Activated CD4-positive, alpha-beta T cell treated with anti-CD3 and anti-CD28 coated beads for 36 hours (primary cell): ENCODE measurements at regions of chr15 and their contacts with region 1.

Region 1: DNA sequence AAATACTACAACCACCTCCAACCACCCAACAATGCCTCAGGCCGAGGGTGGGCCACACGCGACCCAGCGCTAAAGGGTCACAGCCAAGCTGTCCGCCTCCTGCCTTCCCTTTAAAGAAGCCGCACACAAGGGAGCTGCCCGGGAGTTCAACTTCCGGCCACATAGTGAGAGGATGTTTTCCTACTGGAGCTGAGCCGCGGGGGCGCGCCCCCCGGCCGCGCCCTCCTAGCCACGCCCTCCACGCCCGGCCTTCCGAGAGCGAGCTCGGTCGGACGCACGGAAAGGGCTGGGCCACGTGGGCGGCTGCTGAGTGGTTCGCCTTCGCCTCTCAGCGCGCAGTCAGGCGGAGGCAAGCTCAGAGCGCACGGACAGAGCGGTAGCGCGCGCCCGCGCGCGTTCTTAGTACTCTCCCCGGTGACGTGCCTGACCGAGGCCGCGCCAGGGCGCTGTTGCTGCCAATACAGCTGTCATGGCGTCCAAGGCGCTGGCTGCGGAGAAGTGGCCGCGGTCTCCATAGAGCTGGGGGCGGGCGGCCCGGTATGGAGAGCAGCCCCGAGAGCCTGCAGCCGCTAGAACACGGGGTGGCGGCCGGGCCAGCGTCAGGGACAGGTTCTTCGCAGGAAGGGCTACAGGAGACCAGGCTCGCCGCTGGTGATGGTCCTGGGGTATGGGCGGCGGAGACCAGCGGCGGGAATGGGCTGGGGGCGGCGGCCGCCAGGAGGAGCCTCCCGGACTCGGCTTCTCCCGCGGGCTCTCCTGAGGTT is at the start of gene MINDY2:
- DNase-seq: peak; percentile 97
- ATAC-seq: peak; percentile 96
- H3K4me3 Mint-ChIP-seq: no peak within 1 kb of the TSS
- H3K27ac Mint-ChIP-seq: peak within 1 kb of the TSS; percentile 88
- H3K4me1 Mint-ChIP-seq: peaks cover 12% of the 10 kb centered on the region
- H3K27me3 Mint-ChIP-seq: no peaks in the 10 kb centered on the region
- total RNA-seq, gene MINDY2: 8.2 to 9.2 TPM

Region 2: GRCh38 chr15:56969265-56969895 is 1801.7 kb before region 1 on chr15:
- CTCF ChIA-PET with region 1: no interaction called
- POLR2A ChIA-PET with region 1: interaction called, 11 read pairs
- intact Hi-C with region 1: no loop called
- DNase-seq: no peak
- ATAC-seq: no peak
- H3K4me3 Mint-ChIP-seq: no peak overlapping the region
- H3K27ac Mint-ChIP-seq: no peak overlapping the region
- H3K4me1 Mint-ChIP-seq: peaks cover 53% of the 10 kb centered on the region
- H3K27me3 Mint-ChIP-seq: no peaks in the 10 kb centered on the region

Region 3: GRCh38 chr15:58274885-58275284 is 496.2 kb before region 1 on chr15:
- CTCF ChIA-PET with region 1: no interaction called
- POLR2A ChIA-PET with region 1: interaction called, 12 read pairs
- intact Hi-C with region 1: no loop called
- DNase-seq: no peak
- ATAC-seq: no peak
- H3K4me3 Mint-ChIP-seq: no peak overlapping the region
- H3K27ac Mint-ChIP-seq: no peak overlapping the region
- H3K4me1 Mint-ChIP-seq: peaks cover 4% of the 10 kb centered on the region
- H3K27me3 Mint-ChIP-seq: peaks cover 4% of the 10 kb centered on the region

Region 4: DNA sequence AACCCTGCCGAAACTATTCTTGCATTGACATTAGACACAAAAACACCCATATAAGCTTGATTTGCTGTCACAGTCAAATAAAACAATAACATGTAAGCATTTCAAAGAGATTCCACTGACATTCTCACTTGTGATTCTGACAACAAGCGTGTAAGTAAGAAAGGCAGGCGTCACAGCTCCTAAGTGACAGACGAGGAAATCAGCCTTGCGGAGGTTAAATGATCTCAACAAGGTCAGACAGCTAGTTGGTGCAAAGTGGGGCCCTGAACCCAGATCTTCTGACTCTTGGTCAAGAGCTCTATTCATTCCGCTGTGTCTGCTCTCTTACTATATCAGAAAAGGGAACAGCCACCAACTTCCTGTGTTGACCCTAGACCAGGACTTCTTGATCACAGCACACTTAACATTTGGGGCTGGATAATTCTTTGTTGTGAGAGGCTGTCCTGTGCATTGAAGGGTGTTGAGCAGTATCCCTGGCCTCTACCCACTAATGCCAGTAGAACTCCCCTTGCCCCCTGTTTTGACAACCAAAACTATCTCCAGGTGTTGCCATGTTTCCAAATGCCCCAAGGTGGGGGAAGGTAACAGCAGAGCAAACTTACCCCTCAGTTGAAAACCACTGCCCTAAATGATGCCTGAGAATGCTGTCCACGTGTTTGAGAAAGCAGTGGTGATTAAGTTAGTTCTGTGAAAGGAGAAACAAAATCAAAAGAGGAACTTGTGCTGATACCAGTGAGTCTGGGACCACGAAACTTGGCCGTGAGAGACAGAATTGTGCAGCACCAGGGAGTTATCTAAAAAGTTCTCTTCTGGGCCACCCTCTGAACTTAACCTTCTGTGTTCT is 253.1 kb before region 1 on chr15:
- CTCF ChIA-PET with region 1: interaction called, 4 read pairs
- POLR2A ChIA-PET with region 1: no interaction called
- intact Hi-C with region 1: loop called in 1 of 2 experiments (anchors 5 kb)
- DNase-seq: peak; percentile 35
- ATAC-seq: peak; percentile 17
- H3K4me3 Mint-ChIP-seq: no peak overlapping the region
- H3K27ac Mint-ChIP-seq: peak overlapping the region; percentile 40
- H3K4me1 Mint-ChIP-seq: peaks cover 51% of the 10 kb centered on the region
- H3K27me3 Mint-ChIP-seq: peaks cover 3% of the 10 kb centered on the region

Region 5: DNA sequence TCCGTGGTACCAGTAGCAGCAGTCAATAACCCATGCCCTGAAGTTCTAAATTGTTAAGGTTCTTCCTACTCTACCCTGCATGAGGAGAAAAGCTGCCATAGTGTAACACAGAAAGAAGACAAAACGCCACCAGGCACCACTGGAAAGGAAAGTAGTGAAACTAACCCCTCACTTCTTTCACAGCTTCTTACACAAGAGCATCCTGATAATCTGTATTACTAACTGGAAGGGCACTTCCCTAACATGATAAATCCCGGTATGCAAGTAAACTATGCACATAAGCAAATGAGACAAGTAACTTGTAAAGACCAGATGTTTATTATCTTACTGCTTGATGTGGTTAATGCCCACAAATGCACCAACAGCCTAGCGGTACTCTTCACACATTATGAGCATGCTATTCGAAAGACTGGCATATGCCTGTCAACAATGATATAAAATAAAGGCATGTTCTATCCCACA is 162.9 kb before region 1 on chr15:
- CTCF ChIA-PET with region 1: no interaction called
- POLR2A ChIA-PET with region 1: no interaction called
- intact Hi-C with region 1: no loop called
- DNase-seq: no peak
- ATAC-seq: no peak
- H3K4me3 Mint-ChIP-seq: no peak overlapping the region
- H3K27ac Mint-ChIP-seq: no peak overlapping the region
- H3K4me1 Mint-ChIP-seq: peaks cover 19% of the 10 kb centered on the region
- H3K27me3 Mint-ChIP-seq: no peaks in the 10 kb centered on the region